CD8-positive, alpha-beta memory T cell (primary cell): ENCODE measurements at regions of chr17 and their contacts with region 1.

Region 1: GRCh38 chr17:50865984-50866774 is at the start of gene TOB1:
- DNase-seq: peak; percentile 95 to 97 (median 95)
- H3K4me3 ChIP-seq: peak within 1 kb of the TSS; percentile 97
- H3K4me3 Mint-ChIP-seq: peak within 1 kb of the TSS; percentile 96 to 99 (median 98)
- H3K27ac ChIP-seq: peak within 1 kb of the TSS; percentile 98
- H3K27ac Mint-ChIP-seq: peak within 1 kb of the TSS; percentile 99 to 100 (median 99)
- H3K4me1 ChIP-seq: peaks cover 62% of the 10 kb centered on the region
- H3K4me1 Mint-ChIP-seq: peaks cover 54 to 66% (median 63%) of the 10 kb centered on the region in 3 donors
- H3K27me3 ChIP-seq: no peaks in the 10 kb centered on the region
- H3K27me3 Mint-ChIP-seq: peaks cover 0 to 3% of the 10 kb centered on the region in 2 donors
- total RNA-seq, gene TOB1: 32.6 to 34.5 TPM

Region 2: DNA sequence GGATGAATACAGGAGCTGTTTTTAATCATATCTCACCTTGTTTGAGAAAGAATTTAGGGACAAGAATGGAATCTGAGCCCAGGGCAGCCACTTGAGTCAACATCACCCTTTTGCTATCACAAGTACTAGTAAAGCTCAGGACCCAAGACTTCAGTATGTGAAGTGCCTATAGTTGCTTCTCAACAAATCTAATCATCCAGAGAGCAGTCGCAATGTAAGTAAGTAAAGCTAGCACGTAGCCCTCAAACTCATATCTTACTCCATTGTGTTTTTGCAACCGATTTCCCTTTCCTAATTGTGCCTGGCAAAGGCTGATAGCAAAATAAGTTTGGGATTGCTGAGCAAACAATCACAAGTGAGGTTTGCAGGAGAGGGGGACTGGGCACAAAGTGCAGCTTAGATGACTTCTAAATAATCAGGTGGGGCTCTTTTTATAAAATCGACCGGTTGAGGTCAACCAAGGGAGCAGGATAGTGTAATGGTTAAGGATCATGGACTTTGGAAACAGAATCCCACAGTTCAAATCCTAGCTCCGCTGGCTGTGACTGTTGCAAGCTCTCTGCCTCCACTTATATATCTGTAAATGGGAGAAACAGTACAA is 13.1 kb before region 1 on chr17:
- CTCF ChIA-PET with region 1: interaction called, 33 read pairs
- POLR2A ChIA-PET with region 1: interaction called, 35 read pairs
- DNase-seq: no peak
- H3K4me3 ChIP-seq: no peak overlapping the region
- H3K4me3 Mint-ChIP-seq: peak overlapping the region in 4 of 7 donors; percentile 68 to 86 (median 84)
- H3K27ac ChIP-seq: no peak overlapping the region
- H3K27ac Mint-ChIP-seq: peak overlapping the region in 6 of 8 donors; percentile 59 to 93 (median 84)
- H3K4me1 ChIP-seq: peaks cover 8% of the 10 kb centered on the region
- H3K4me1 Mint-ChIP-seq: peaks cover 11 to 15% (median 14%) of the 10 kb centered on the region in 3 donors
- H3K27me3 ChIP-seq: no peaks in the 10 kb centered on the region
- H3K27me3 Mint-ChIP-seq: peaks cover 0 to 4% of the 10 kb centered on the region in 2 donors

Region 3: GRCh38 chr17:50904521-50905459 is 38.6 kb after region 1 on chr17:
- CTCF ChIA-PET with region 1: interaction called, 4 read pairs
- POLR2A ChIA-PET with region 1: interaction called, 70 read pairs
- DNase-seq: no peak
- H3K4me3 ChIP-seq: no peak overlapping the region
- H3K4me3 Mint-ChIP-seq: peak overlapping the region in 4 of 7 donors; percentile 18 to 70 (median 42)
- H3K27ac ChIP-seq: peak overlapping the region; percentile 55
- H3K27ac Mint-ChIP-seq: peak overlapping the region; percentile 84 to 96 (median 92)
- H3K4me1 ChIP-seq: peaks cover 53% of the 10 kb centered on the region
- H3K4me1 Mint-ChIP-seq: peaks cover 47 to 58% (median 51%) of the 10 kb centered on the region in 3 donors
- H3K27me3 ChIP-seq: no peaks in the 10 kb centered on the region
- H3K27me3 Mint-ChIP-seq: peaks cover 0 to 1% of the 10 kb centered on the region in 2 donors

Region 4: DNA sequence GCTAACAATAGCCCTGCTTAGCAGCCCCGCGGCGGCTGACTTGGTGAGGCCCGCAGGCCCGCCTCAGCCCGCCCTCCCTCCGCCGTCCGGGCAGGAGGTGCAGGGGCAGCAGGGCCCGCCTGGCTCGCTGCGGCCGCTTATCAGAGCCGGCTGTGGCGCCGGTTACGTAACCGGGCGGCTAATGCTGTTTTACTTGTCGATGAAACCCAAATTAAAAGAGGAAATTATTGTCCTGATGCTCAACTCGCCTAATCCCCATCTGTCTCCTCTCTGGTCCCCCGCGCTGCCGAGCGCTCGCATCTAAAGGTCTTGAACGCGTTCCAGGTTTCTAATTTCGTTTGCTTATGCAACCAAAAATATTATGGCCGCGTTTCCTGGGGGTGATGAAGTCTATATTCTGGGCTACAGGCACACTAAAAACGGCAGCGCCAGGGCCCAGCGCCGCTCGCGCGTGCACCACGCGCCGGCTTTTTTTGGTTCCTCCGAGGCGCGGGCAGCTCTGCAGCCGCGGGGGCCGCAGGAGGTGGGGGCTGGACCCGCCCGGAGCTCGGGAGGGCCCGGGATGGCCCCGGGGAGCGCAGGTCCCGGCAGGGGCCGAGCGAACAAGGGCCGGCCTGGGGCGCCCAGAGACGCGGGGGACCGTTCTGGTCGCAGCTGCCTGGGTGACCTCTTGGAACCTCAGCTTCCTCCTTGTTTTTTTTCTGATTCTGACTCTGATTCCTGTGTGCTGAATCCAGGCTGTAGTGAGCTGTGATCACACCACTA is 65.1 kb after region 1 on chr17:
- CTCF ChIA-PET with region 1: interaction called, 8 read pairs
- POLR2A ChIA-PET with region 1: interaction called, 43 read pairs
- DNase-seq: peak; percentile 24 to 67 (median 54)
- H3K4me3 ChIP-seq: peak overlapping the region; percentile 60
- H3K4me3 Mint-ChIP-seq: peak overlapping the region; percentile 75 to 97 (median 89)
- H3K27ac ChIP-seq: peak overlapping the region; percentile 44
- H3K27ac Mint-ChIP-seq: peak overlapping the region; percentile 15 to 99 (median 96)
- H3K4me1 ChIP-seq: peaks cover 25% of the 10 kb centered on the region
- H3K4me1 Mint-ChIP-seq: peaks cover 28 to 46% (median 36%) of the 10 kb centered on the region in 3 donors
- H3K27me3 ChIP-seq: no peaks in the 10 kb centered on the region
- H3K27me3 Mint-ChIP-seq: peaks cover 0 to 1% of the 10 kb centered on the region in 2 donors

Region 5: DNA sequence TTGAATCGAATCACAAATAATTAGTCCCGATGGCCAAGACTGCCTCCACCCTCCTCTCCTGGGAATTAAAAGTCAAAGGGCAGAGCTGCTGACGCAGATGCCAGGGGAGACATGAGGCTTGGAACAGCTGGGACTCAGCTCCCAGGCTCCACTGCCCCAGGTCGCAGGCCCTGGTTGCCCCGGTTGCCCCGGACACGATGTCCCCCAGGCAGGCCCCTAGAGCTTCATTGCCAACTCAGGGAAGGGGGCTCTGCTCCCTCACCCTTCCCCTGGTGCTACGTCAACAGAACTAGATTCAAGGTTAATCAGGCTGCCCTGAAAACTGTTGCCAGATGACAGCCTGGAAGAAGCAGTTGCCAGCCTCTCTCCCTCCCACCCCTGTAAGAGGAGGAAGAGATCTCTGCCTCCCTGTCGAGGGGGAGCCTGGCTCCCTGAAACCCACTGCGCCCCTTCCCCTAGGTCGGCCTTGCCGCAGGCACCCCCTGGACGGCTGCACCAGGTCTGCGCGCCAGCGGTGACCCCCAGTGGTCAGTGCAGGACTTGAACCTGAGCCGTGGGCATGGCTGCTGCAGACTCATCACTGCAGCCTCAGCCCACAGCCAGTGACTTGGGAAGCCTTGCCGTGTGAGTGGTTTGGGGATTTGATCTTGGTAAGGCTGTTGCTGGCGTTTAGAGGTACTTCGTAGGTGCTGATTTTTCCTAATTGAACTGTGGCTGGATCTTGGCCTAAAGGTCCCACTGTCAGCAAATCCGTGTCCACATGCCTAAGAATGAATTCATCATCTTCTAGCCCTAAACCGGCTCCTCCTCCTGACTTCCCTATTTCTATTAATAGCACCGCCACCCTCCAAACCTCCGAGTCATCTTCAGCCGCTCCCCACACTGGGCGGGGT is 84.1 kb after region 1 on chr17:
- CTCF ChIA-PET with region 1: interaction called, 38 read pairs
- POLR2A ChIA-PET with region 1: interaction called, 54 read pairs
- DNase-seq: peak; percentile 27 to 74 (median 40)
- H3K4me3 ChIP-seq: no peak overlapping the region
- H3K4me3 Mint-ChIP-seq: no peak overlapping the region
- H3K27ac ChIP-seq: peak overlapping the region; percentile 28
- H3K27ac Mint-ChIP-seq: peak overlapping the region in 2 of 8 donors; percentile 2 to 92
- H3K4me1 ChIP-seq: peaks cover 15% of the 10 kb centered on the region
- H3K4me1 Mint-ChIP-seq: peaks cover 8 to 23% (median 22%) of the 10 kb centered on the region in 3 donors
- H3K27me3 ChIP-seq: no peaks in the 10 kb centered on the region
- H3K27me3 Mint-ChIP-seq: no peaks in the 10 kb centered on the region